ENCODE measurements at regions of chr6 and their contacts with region 1.

Region 1: DNA sequence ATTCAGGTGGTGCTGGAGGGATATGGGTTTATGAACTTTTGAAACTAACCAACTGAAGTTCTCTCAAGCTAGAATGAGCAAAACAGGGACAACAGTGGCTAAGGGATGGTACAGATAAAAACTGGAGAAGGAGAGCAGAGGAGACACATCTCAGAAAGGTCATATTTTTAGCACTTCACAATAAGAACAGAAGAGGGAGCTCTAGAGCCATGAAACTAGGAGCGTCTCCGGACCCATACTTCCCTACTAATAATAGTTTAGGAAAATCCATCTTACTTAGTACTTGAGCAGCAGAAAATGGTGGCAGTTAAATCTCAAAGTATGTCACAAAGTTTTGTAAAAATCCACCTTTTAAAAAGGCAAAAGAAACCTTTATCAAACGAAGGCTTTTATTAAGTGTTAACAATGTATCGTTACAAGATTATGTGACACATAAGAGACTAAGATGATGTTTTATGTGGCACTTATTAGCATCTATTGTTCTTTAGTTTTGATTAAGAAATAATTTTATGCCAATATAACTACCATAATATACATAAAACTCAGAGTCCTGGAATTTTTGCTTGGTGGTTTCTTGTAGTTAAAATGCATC is 278.6 kb downstream of the TBC1D32 start:
- DNase-seq: no peak
- H3K4me3 Mint-ChIP-seq: no peak overlapping the region
- H3K27ac Mint-ChIP-seq: no peak overlapping the region
- H3K4me1 Mint-ChIP-seq: no peaks in the 10 kb centered on the region
- H3K27me3 Mint-ChIP-seq: no peaks in the 10 kb centered on the region

Region 2: GRCh38 chr6:119917186-119917585 is 1138.5 kb before region 1 on chr6:
- intact Hi-C with region 1: no loop called
- DNase-seq: no peak
- H3K4me3 Mint-ChIP-seq: no peak overlapping the region
- H3K27ac Mint-ChIP-seq: no peak overlapping the region
- H3K4me1 Mint-ChIP-seq: no peaks in the 10 kb centered on the region
- H3K27me3 Mint-ChIP-seq: no peaks in the 10 kb centered on the region

Region 3: DNA sequence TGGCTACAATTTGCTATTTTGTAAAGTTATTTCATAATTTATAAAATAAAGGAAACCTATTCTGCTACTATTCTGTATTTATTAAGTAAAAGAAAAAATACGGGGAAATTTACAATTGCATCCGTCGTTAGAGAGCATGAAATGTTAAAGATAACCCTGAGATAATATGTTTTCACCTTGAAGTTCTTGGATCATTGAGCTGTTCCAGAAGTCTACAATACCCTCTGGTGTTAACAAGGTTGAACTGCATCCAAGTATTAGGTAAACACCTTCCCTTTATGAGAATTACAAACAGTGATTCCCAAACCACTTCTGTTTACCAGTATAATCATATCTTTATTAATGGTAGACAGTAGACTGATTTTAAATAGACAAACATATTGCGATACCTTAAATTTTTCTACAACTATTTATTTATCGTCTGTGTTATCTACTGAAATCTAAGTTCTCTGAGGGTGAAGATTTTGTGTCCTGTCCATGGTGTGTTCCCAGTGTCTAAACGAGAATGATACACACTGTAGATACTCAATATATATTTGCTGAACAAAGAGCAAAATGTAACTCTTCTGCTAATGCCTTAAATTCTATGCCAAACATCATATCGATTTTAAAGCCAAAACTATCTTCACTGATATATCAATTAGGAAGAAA is 250.4 kb after region 1 on chr6:
- intact Hi-C with region 1: loop called (anchors 1 kb)
- DNase-seq: no peak
- H3K4me3 Mint-ChIP-seq: no peak overlapping the region
- H3K27ac Mint-ChIP-seq: no peak overlapping the region
- H3K4me1 Mint-ChIP-seq: peaks cover 5% of the 10 kb centered on the region
- H3K27me3 Mint-ChIP-seq: no peaks in the 10 kb centered on the region

Region 4: DNA sequence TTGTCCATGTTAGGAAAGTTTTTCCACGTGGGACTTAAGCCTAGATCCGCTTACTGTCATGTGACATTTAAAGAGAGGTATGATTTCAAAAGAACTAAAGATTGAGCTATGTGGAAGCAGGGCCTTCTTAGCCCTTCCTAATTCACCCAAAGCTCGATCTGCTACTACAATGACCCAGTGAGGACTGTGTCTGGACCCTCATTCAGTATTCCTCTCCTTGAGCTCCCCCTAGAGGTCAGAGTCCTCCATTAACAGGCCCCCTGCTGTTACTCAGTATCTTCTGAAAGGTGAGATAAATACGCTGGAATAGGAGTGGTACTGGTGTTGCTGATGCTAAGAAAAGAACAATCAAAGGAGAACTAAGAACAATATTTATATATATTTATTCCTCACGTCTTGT is 793.8 kb after region 1 on chr6:
- intact Hi-C with region 1: loop called (anchors 2 kb)
- DNase-seq: no peak
- H3K4me3 Mint-ChIP-seq: no peak overlapping the region
- H3K27ac Mint-ChIP-seq: no peak overlapping the region
- H3K4me1 Mint-ChIP-seq: no peaks in the 10 kb centered on the region
- H3K27me3 Mint-ChIP-seq: peaks cover 2% of the 10 kb centered on the region

Region 5: DNA sequence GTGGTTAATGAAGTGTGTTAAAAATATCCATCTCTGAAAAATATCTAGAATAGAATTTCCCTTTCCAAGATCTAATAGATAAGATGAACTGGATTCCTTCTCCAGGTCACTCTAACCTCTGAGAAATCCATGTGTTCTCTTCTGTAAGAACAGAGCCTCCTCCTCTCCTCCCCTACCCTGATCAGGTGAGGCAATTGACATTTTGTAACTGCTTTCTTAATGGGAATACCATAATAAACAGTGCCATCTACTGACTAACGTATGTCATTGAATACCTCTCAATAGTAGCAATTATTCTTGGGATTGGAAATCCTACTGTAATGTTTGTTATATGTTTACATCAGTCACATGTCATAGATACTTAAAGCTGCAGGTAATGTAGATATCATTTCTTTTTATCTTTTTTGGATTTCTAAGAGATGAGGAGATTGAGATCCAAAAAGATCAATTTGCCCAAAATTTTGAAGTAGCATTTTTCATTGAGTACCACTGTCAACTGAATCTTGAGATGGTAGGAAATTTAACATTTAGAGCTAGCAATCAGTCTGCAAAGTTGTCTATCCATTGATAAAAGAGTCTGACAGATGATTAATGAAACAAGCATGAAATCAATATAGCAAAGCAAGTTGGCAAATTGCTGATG is 978.0 kb after region 1 on chr6:
- intact Hi-C with region 1: loop called (anchors 1 kb)
- DNase-seq: no peak
- H3K4me3 Mint-ChIP-seq: no peak overlapping the region
- H3K27ac Mint-ChIP-seq: no peak overlapping the region
- H3K4me1 Mint-ChIP-seq: no peaks in the 10 kb centered on the region
- H3K27me3 Mint-ChIP-seq: peaks cover 3% of the 10 kb centered on the region

Measured in activated T-helper 1 cell treated with anti-CD3 and anti-CD28 coated beads, Interleukin-12 subunit alpha, Interleukin-12 subunit beta, Interleukin-2, Interleukin-4 antibody, amounts not matched to agents 30 ng/mL and 10 ng/mL and 1 ng/mL, durations not matched to agents 14 hours and 24 hours and 36 hours (primary cell).